Caco-2 (cell line): ENCODE measurements at regions of chr10 and their contacts with region 1.

Region 1: DNA sequence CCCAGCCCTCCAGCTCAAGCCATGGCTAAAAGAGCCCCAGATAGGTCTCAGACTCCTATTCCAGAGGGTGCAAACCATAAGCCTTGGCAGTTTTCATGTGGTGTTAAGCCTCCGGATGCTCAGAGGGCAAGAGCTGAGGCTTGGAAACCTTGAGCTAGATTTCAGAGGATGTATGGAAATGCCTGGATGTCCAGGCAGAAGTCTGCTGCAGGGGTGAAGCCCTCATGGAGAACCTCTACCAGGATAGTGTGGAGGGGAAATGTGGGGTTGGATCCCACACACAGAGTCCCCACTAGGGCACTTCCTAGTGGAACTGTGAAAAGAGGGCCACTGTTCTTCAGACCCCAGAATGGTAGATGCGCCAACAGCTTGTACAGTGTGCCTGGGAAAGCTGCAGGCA is 13.2 kb upstream of the HPSE2 start:
- DNase-seq: no peak
- H3K4me3 ChIP-seq: no peak overlapping the region
- H3K4me3 Mint-ChIP-seq: no peak overlapping the region
- H3K27ac Mint-ChIP-seq: no peak overlapping the region
- H3K4me1 ChIP-seq: no peaks in the 10 kb centered on the region
- H3K4me1 Mint-ChIP-seq: no peaks in the 10 kb centered on the region
- H3K27me3 ChIP-seq: no peaks in the 10 kb centered on the region
- H3K27me3 Mint-ChIP-seq: no peaks in the 10 kb centered on the region
- CTCF ChIP-seq: no peak

Region 2: DNA sequence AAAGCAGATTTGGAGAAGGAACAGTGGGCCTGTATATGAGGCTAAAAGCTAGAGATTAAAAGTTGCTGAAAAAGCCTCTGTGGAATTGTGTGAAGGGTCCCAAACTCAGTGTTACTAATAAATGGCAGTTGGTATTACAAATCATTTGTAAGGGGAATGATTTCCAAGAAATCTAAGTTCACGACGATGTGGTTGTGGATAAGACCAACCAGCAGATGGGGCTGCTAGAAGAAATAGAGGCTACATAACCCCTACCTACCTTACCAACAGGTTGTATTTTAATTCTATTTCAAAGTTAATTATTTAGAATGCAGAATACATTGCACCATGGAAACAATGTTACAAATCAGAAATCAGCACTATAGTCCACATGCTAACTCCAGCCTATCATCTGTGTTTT is 390.3 kb before region 1 on chr10:
- CTCF ChIA-PET with region 1: no interaction called
- POLR2A ChIA-PET with region 1: no interaction called
- intact Hi-C with region 1: loop called (anchors 1 kb)
- DNase-seq: peak in 1 of 2 experiments; percentile 3
- H3K4me3 ChIP-seq: no peak overlapping the region
- H3K4me3 Mint-ChIP-seq: no peak overlapping the region
- H3K27ac Mint-ChIP-seq: no peak overlapping the region
- H3K4me1 ChIP-seq: no peaks in the 10 kb centered on the region
- H3K4me1 Mint-ChIP-seq: no peaks in the 10 kb centered on the region
- H3K27me3 ChIP-seq: no peaks in the 10 kb centered on the region
- H3K27me3 Mint-ChIP-seq: no peaks in the 10 kb centered on the region
- CTCF ChIP-seq: peak; percentile 21 to 28

Region 3: GRCh38 chr10:99161165-99161564 is 87.7 kb before region 1 on chr10:
- CTCF ChIA-PET with region 1: no interaction called
- POLR2A ChIA-PET with region 1: no interaction called
- intact Hi-C with region 1: no loop called
- DNase-seq: no peak
- H3K4me3 ChIP-seq: no peak overlapping the region
- H3K4me3 Mint-ChIP-seq: no peak overlapping the region
- H3K27ac Mint-ChIP-seq: no peak overlapping the region
- H3K4me1 ChIP-seq: no peaks in the 10 kb centered on the region
- H3K4me1 Mint-ChIP-seq: no peaks in the 10 kb centered on the region
- H3K27me3 ChIP-seq: no peaks in the 10 kb centered on the region
- H3K27me3 Mint-ChIP-seq: no peaks in the 10 kb centered on the region
- CTCF ChIP-seq: no peak